Transverse colon (tissue), 4 donors: ENCODE measurements at regions of chr4 and their contacts with region 1.

Region 1: DNA sequence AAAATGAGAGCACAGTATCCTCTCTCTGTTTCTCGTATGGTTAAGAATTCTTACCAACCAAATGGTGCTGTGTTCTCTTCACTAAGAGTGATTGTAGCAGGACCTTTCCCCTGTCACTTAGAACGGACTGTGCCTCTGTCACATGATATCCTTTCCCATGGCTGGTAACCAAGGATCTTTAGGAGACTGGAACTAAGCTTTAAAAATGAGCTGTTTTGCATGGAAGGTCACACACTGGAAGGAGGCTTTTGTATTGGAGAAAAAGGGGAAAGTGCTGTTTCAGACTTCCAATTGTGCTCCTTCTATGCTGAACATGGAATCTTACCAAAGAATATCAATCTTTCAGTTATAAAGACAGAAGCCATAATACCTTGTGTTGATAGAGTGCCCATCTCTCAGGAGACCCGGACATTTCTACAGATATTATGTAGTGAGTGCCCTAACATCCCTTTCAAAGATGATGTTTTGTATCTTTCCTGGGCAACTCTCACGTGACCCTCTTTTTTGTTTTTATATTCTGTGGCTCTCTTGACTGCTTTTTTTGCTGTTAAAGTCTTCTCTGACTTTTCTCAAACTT is 148.6 kb downstream of the SLC4A4 start:
- DNase-seq: no peak
- H3K4me3 ChIP-seq: no peak overlapping the region
- H3K27ac ChIP-seq: no peak overlapping the region
- H3K4me1 ChIP-seq: no peaks in the 10 kb centered on the region
- H3K27me3 ChIP-seq: no peaks in the 10 kb centered on the region
- CTCF ChIP-seq: no peak
- EP300 ChIP-seq: no peak
- POLR2A ChIP-seq: no peak

Region 2: GRCh38 chr4:71473541-71474240 is 13.7 kb before region 1 on chr4:
- in situ Hi-C with region 1: no loop called
- intact Hi-C with region 1: loop called (anchors 1 kb)
- DNase-seq: no peak
- H3K4me3 ChIP-seq: no peak overlapping the region
- H3K27ac ChIP-seq: no peak overlapping the region
- H3K4me1 ChIP-seq: no peaks in the 10 kb centered on the region
- H3K27me3 ChIP-seq: no peaks in the 10 kb centered on the region
- CTCF ChIP-seq: no peak
- EP300 ChIP-seq: no peak
- POLR2A ChIP-seq: no peak

Region 3: GRCh38 chr4:71663780-71664179 is 176.3 kb after region 1 on chr4:
- in situ Hi-C with region 1: no loop called
- intact Hi-C with region 1: no loop called
- DNase-seq: no peak
- H3K4me3 ChIP-seq: no peak overlapping the region
- H3K27ac ChIP-seq: no peak overlapping the region
- H3K4me1 ChIP-seq: no peaks in the 10 kb centered on the region
- H3K27me3 ChIP-seq: no peaks in the 10 kb centered on the region
- CTCF ChIP-seq: no peak
- EP300 ChIP-seq: no peak
- POLR2A ChIP-seq: no peak